CD8-positive, alpha-beta T cell (primary cell): ENCODE measurements at regions of chr18 and their contacts with region 1.

Region 1: GRCh38 chr18:21038201-21038600 is 73.4 kb downstream of the ROCK1 start:
- DNase-seq: no peak
- ATAC-seq: no peak
- H3K4me3 ChIP-seq: no peak overlapping the region
- H3K4me3 Mint-ChIP-seq: no peak overlapping the region
- H3K27ac ChIP-seq: no peak overlapping the region
- H3K27ac Mint-ChIP-seq: peak overlapping the region; percentile 14
- H3K4me1 ChIP-seq: no peaks in the 10 kb centered on the region
- H3K4me1 Mint-ChIP-seq: peaks cover 13% of the 10 kb centered on the region
- H3K27me3 ChIP-seq: no peaks in the 10 kb centered on the region
- H3K27me3 Mint-ChIP-seq: no peaks in the 10 kb centered on the region
- CTCF ChIP-seq: no peak

Region 2: GRCh38 chr18:21074336-21075323 is 36.4 kb after region 1 on chr18:
- CTCF ChIA-PET with region 1: no interaction called
- POLR2A ChIA-PET with region 1: no interaction called
- intact Hi-C with region 1: loop called in 1 of 2 experiments (anchors 5 kb)
- DNase-seq: no peak
- ATAC-seq: no peak
- H3K4me3 ChIP-seq: no peak overlapping the region
- H3K4me3 Mint-ChIP-seq: peak overlapping the region; percentile 45
- H3K27ac ChIP-seq: no peak overlapping the region
- H3K27ac Mint-ChIP-seq: peak overlapping the region; percentile 66
- H3K4me1 ChIP-seq: peaks cover 59% of the 10 kb centered on the region
- H3K4me1 Mint-ChIP-seq: peaks cover 77% of the 10 kb centered on the region
- H3K27me3 ChIP-seq: no peaks in the 10 kb centered on the region
- H3K27me3 Mint-ChIP-seq: no peaks in the 10 kb centered on the region
- CTCF ChIP-seq: no peak

Region 3: DNA sequence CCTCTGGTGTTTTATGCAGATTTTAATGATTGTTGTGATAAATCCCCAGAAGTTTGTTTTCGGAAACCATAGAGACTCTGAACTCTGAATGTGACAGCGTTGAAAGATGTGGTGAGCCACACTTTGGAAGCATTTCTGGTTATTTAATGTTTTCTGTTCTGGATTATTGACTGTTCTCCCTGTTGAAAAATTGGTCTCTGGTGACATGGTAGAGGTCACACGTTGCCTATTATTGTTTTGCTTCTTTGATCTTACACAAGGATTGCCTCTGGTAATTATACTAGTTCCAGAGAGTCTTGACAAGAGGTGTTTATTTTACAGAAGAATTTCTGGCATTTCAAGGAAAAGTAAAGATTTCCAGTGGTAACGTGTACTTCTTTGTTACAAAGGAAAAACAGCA is 330.9 kb after region 1 on chr18:
- CTCF ChIA-PET with region 1: no interaction called
- POLR2A ChIA-PET with region 1: no interaction called
- intact Hi-C with region 1: no loop called
- DNase-seq: no peak
- ATAC-seq: no peak
- H3K4me3 ChIP-seq: no peak overlapping the region
- H3K4me3 Mint-ChIP-seq: no peak overlapping the region
- H3K27ac ChIP-seq: no peak overlapping the region
- H3K27ac Mint-ChIP-seq: no peak overlapping the region
- H3K4me1 ChIP-seq: no peaks in the 10 kb centered on the region
- H3K4me1 Mint-ChIP-seq: no peaks in the 10 kb centered on the region
- H3K27me3 ChIP-seq: peaks cover 0 to 2% of the 10 kb centered on the region in 2 experiments
- H3K27me3 Mint-ChIP-seq: peaks cover 13% of the 10 kb centered on the region
- CTCF ChIP-seq: no peak